Mammary epithelial cell (primary cell): ENCODE measurements at regions of chr2 and their contacts with region 1.

Region 1: GRCh38 chr2:147910990-147911473 is 66.2 kb downstream of the ACVR2A start:
- DNase-seq: peak; percentile 42
- H3K4me3 ChIP-seq: no peak overlapping the region
- H3K27ac ChIP-seq: no peak overlapping the region
- H3K4me1 ChIP-seq: peaks cover 5% of the 10 kb centered on the region
- H3K27me3 ChIP-seq: no peaks in the 10 kb centered on the region
- CTCF ChIP-seq: peak; percentile 47 to 65

Region 2: DNA sequence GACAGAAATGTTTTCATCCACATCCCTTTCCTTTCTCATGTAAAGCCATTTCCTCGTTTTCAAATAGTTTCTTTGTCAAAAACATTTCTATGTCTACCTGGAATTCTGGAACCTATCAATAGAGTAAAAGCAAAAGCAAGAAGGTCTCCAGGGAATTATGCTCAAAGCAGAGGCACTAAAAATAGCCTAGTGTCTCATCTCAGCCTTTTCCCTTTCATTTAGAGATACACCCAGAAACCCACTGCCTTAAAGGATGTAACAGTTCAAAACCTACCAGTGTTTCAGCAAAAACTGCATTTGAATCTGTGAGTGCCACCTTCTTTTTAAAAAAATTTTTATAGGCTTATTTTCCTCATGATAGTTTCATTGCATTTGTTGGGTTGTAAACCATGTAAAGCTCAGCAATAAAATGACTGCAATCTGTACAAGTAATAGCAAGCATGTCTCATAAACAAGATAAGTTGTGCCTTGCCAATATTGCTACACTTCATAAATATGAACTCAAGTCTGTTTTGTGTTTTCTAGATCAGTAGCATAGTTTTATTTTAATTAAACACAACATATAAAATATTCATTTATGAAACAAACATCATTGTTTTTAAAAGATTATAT is 993.5 kb before region 1 on chr2:
- CTCF ChIA-PET with region 1: no interaction called
- dilution Hi-C with region 1: no loop called
- in situ Hi-C with region 1: loop called in 1 of 2 experiments (anchors 25 kb)
- intact Hi-C with region 1: no loop called
- DNase-seq: no peak
- H3K4me3 ChIP-seq: no peak overlapping the region
- H3K27ac ChIP-seq: no peak overlapping the region
- H3K4me1 ChIP-seq: no peaks in the 10 kb centered on the region
- H3K27me3 ChIP-seq: no peaks in the 10 kb centered on the region
- CTCF ChIP-seq: no peak

Region 3: DNA sequence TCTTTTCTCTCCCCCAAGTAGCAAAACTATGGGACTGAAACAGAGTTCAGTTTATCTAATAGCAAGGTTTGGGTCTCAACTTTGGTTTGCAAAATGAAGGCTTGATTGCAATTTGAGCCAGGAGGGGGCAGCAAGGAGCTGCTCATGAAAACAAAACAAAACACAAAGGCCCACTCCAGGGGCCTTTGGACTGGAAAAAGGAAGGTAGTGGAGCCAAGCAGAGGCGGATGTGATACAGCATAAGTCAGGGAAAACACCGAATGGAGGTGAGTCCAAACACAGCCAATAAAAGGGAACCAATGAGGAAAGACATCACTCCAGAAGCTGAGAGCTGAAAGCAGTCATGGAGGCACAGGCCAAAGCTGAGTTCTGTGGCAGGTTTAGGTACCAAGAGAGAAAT is 865.9 kb before region 1 on chr2:
- CTCF ChIA-PET with region 1: no interaction called
- dilution Hi-C with region 1: no loop called
- in situ Hi-C with region 1: loop called (anchors 25 kb)
- intact Hi-C with region 1: loop called (anchors 1 kb)
- DNase-seq: peak; percentile 69
- H3K4me3 ChIP-seq: no peak overlapping the region
- H3K27ac ChIP-seq: no peak overlapping the region
- H3K4me1 ChIP-seq: no peaks in the 10 kb centered on the region
- H3K27me3 ChIP-seq: no peaks in the 10 kb centered on the region
- CTCF ChIP-seq: peak; percentile 63 to 78

Region 4: GRCh38 chr2:147082850-147083522 is 828.0 kb before region 1 on chr2:
- CTCF ChIA-PET with region 1: no interaction called
- dilution Hi-C with region 1: no loop called
- in situ Hi-C with region 1: no loop called
- intact Hi-C with region 1: loop called (anchors 1 kb)
- DNase-seq: peak; percentile 58
- H3K4me3 ChIP-seq: no peak overlapping the region
- H3K27ac ChIP-seq: no peak overlapping the region
- H3K4me1 ChIP-seq: no peaks in the 10 kb centered on the region
- H3K27me3 ChIP-seq: no peaks in the 10 kb centered on the region
- CTCF ChIP-seq: peak; percentile 90 to 98

Region 5: DNA sequence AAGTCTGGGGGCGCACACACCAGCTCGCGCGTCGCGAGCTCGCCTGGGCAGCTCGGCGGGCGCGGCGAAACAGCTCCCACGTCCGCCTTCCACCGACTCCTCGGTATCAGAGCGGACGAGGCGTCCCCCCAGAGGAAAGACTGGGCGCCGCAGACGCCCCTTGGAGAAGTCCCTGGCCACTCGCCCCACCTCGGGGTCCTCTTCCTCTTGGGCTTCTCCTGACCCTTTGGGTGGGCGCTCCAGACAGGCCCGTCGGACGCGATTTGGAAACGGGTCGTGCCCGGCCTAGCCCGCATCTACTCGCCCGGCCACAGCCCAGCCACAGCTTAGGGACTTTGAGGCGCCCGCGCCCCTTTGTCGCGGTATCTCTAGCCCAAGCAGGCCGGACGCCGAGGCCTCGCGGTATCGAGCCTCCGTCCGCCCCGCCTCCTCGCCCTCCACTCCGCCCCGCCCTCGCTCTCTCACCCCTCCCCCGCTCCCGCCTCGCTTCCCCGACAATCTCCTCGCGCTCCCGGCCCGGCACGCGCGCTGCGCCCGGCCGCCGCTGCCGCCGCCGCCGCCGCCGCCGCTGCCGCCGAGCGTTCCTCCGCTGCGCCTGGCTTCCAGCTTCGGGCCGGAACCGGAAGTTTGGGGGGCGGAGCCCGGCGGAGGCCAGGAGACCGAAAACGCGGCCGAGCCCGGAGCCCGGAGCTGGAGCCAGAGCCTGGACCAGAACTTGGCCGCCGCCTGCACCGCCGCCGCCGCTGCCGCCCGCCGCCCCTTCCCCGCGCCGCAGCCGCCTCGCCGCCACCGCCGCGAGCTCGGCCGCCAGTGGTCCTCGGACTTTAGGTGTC is 67.0 kb before region 1 on chr2:
- CTCF ChIA-PET with region 1: interaction called, 4 read pairs
- dilution Hi-C with region 1: no loop called
- in situ Hi-C with region 1: no loop called
- intact Hi-C with region 1: loop called (anchors 2 kb)
- DNase-seq: peak; percentile 87
- H3K4me3 ChIP-seq: peak overlapping the region; percentile 72 to 90 (median 88)
- H3K27ac ChIP-seq: peak overlapping the region; percentile 86
- H3K4me1 ChIP-seq: no peaks in the 10 kb centered on the region
- H3K27me3 ChIP-seq: no peaks in the 10 kb centered on the region
- CTCF ChIP-seq: peak in 1 of 2 donors; percentile 42